Dorsolateral prefrontal cortex (tissue), 120 donors: ENCODE measurements at regions of chr4 and their contacts with region 1.

Region 1: DNA sequence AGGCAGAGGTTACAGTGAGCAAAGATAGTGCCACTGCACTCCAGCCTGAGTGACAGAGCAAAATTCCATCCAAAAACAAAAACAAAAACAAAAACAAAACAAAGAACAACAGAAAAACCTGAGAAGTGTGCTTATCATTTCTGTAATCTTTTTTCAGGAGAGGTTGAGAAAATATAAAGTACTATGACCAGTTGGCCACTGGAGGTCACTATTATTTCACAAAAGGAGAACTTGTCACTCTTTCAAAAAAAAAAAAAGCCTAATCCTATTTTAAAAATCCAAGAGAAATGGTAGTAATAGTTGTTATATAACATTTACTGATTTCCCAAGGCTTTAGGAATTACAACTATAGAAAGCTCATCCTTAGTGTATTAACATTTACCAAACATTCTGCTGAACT is 24.9 kb upstream of the RNF150 start:
- DNase-seq: no peak
- H3K4me3 ChIP-seq: no peak overlapping the region
- H3K27ac ChIP-seq: no peak overlapping the region
- H3K27me3 ChIP-seq: peaks cover 0 to 8% (median 0%) of the 10 kb centered on the region in 45 donors
- CTCF ChIP-seq: peak; percentile 30 to 80 (median 66)

Region 2: GRCh38 chr4:140603278-140603677 is 554.9 kb before region 1 on chr4:
- intact Hi-C with region 1: loop called in 1 of 2 experiments (anchors 5 kb)
- DNase-seq: no peak
- H3K4me3 ChIP-seq: no peak overlapping the region
- H3K27ac ChIP-seq: no peak overlapping the region
- H3K27me3 ChIP-seq: peaks cover 0 to 13% (median 0%) of the 10 kb centered on the region in 45 donors
- CTCF ChIP-seq: no peak